ENCODE measurements at regions of chr17 and their contacts with region 1.

Region 1: GRCh38 chr17:36992701-36993100 is 43.9 kb downstream of the AATF start:
- DNase-seq: no peak
- H3K4me3 ChIP-seq: no peak overlapping the region
- H3K27ac ChIP-seq: no peak overlapping the region
- H3K4me1 ChIP-seq: no peaks in the 10 kb centered on the region
- H3K27me3 ChIP-seq: no peaks in the 10 kb centered on the region
- CTCF ChIP-seq: no peak

Region 2: DNA sequence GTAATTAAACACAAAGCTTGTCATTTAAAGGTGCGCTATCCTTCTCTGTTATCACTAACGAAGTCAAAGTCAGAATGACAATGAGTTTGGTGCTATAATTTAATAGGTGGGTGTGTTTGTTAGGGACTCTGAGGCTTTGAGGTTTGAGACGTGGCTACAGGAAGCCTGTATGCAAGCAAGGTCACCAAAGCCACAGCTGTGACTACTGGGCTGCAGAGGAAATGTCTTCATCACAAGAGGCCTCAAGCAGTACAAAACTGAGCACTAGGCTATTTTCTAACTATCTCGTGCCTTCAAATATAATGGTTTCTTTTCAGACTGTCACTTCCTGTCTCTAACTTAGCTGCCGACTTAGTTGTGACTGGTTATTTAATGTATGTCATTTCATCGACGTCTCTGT is 97.3 kb after region 1 on chr17:
- CTCF ChIA-PET with region 1: no interaction called
- POLR2A ChIA-PET with region 1: interaction called, 12 read pairs
- intact Hi-C with region 1: no loop called
- DNase-seq: no peak
- H3K4me3 ChIP-seq: no peak overlapping the region
- H3K27ac ChIP-seq: no peak overlapping the region
- H3K4me1 ChIP-seq: peaks cover 11% of the 10 kb centered on the region
- H3K27me3 ChIP-seq: no peaks in the 10 kb centered on the region
- CTCF ChIP-seq: no peak